CD8-positive, alpha-beta T cell (primary cell): ENCODE measurements at regions of chr17 and their contacts with region 1.

Region 1: DNA sequence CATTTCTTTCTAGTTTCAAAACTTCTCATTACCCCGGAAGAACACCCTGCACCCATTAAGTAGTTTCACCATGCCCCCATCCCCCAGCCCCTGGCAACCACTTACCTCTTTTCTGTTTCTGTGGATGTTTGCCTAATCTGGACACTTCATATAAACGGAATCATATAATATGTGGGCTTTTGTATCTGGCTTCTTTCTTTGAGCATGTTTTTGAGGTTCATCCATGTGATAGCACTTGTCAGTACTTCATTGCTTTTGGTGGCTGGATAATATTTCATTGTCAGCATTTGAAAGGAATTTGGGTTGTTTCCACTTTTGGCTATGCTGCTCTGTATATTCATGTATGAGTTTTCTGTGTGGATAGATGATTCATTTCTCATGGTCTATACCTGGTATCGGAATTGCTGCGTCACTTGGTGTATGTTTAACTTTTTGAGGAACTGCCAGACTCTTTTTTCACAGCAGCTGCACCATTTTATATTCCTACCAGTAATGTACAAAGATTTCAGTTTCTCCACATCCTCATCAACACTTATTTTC is 30.0 kb upstream of the SLC5A10 start:
- DNase-seq: no peak
- ATAC-seq: no peak
- H3K4me3 ChIP-seq: no peak overlapping the region
- H3K4me3 Mint-ChIP-seq: no peak overlapping the region
- H3K27ac ChIP-seq: no peak overlapping the region
- H3K27ac Mint-ChIP-seq: peak overlapping the region; percentile 66
- H3K4me1 ChIP-seq: peaks cover 54% of the 10 kb centered on the region
- H3K4me1 Mint-ChIP-seq: peaks cover 71% of the 10 kb centered on the region
- H3K27me3 ChIP-seq: no peaks in the 10 kb centered on the region
- H3K27me3 Mint-ChIP-seq: no peaks in the 10 kb centered on the region
- CTCF ChIP-seq: no peak

Region 2: DNA sequence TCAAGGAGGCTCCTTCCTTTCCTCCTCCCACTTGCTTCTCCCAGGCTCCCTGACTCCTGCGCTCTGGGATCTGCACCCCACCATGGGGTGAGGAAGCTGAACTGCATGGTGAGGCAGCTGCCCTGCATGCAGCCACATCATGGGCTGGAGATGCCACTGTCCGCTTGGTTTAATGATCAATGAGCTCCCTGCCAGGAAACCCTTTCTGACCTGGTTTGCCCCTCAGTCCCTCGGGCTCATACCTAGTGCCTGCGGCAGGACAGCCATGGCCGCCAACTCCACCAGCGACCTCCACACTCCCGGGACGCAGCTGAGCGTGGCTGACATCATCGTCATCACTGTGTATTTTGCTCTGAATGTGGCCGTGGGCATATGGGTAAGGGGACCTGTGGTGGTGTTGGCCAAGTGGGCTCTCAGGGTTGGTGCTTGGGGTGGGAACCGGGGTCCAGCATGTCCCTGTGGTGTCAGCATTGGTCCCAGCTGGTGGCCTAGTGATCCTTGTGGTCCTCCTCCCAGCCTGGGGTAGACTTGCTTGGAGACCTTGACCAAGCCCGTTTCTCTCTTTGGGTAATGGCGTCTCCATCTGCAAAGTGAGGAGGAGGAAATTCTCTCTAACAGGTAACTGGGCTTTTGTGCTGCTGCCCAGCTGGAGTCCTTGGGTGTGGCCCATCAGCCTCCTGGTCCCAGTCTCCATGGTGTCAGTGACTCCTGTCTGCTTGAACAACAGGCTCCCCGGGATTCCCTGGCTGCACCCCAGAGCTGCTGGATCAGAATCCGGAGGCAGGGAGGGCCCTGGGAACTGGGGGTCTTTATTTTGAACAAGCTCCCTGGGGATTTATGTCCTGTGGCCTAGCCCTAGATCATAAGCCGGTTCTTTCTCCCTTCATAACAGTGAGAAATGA is 30.2 kb after region 1 on chr17 and contains the start of gene SLC5A10:
- CTCF ChIA-PET with region 1: no interaction called
- POLR2A ChIA-PET with region 1: interaction called, 9 read pairs
- intact Hi-C with region 1: loop called in 1 of 2 experiments (anchors 2 kb)
- DNase-seq: peak in 1 of 9 experiments; percentile 2
- ATAC-seq: no peak
- H3K4me3 ChIP-seq: no peak within 1 kb of the TSS
- H3K4me3 Mint-ChIP-seq: no peak within 1 kb of the TSS
- H3K27ac ChIP-seq: no peak within 1 kb of the TSS
- H3K27ac Mint-ChIP-seq: no peak within 1 kb of the TSS
- H3K4me1 ChIP-seq: peaks cover 32% of the 10 kb centered on the region
- H3K4me1 Mint-ChIP-seq: peaks cover 40% of the 10 kb centered on the region
- H3K27me3 ChIP-seq: no peaks in the 10 kb centered on the region
- H3K27me3 Mint-ChIP-seq: no peaks in the 10 kb centered on the region
- CTCF ChIP-seq: no peak
- total RNA-seq, gene SLC5A10: not detected